CD8-positive, alpha-beta memory T cell (primary cell): ENCODE measurements at regions of chr16 and their contacts with region 1.

Region 1: DNA sequence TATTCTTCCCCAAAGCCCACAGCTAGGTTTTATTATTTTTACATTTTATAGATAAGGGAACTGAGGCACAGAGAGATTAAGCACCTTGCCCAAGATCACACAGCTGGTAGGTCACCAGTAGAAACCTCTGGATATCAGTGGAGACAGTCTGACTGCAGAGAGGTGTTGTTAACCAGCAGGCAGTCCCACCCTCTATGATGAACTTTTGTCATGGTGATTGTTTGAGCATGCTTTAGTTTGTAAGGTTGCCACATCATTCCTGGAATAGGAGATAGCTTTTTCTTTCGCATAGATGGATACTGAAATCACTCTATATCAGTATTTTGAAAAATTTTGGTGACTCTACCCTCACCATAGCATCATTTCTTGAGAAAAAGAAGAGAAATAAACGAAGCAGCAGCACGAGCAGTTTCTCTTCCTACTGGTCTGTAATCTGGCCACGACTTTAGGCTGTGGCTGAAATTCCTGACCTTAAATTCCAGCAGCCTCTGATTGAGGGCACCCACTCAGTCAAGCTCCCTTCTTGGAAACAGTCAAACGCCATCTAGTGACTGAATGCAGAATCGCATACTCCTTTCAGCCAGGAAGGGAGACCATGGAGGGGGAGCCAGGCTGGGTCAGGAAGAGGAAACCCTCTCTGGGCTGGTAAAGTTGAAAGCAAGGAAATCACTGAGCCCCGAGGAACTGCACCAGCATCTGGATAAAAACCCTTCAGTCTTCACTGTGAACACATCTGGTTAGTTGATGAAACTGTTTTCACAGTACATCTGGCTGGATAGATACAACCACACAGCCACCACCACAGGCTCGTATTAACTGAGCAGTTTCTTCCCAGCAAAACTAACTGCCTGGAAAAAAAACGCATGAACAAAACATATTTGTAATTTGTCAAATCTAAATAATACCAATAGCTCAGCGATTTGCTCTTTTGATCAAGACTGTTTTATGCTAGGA is 108.4 kb upstream of the XYLT1 start:
- DNase-seq: peak; percentile 32 to 61 (median 47)
- H3K4me3 ChIP-seq: no peak overlapping the region
- H3K4me3 Mint-ChIP-seq: no peak overlapping the region
- H3K27ac ChIP-seq: no peak overlapping the region
- H3K27ac Mint-ChIP-seq: peak overlapping the region in 2 of 8 donors; percentile 22 to 59
- H3K4me1 ChIP-seq: no peaks in the 10 kb centered on the region
- H3K4me1 Mint-ChIP-seq: peaks cover 0 to 4% (median 4%) of the 10 kb centered on the region in 3 donors
- H3K27me3 ChIP-seq: no peaks in the 10 kb centered on the region
- H3K27me3 Mint-ChIP-seq: peaks cover 3 to 5% of the 10 kb centered on the region in 2 donors

Region 2: GRCh38 chr16:17602678-17603077 is 23.5 kb after region 1 on chr16:
- CTCF ChIA-PET with region 1: interaction called, 11 read pairs
- POLR2A ChIA-PET with region 1: no interaction called
- DNase-seq: no peak
- H3K4me3 ChIP-seq: no peak overlapping the region
- H3K4me3 Mint-ChIP-seq: no peak overlapping the region
- H3K27ac ChIP-seq: no peak overlapping the region
- H3K27ac Mint-ChIP-seq: peak overlapping the region in 1 of 8 donors; percentile 46
- H3K4me1 ChIP-seq: peaks cover 9% of the 10 kb centered on the region
- H3K4me1 Mint-ChIP-seq: peaks cover 12 to 17% (median 16%) of the 10 kb centered on the region in 3 donors
- H3K27me3 ChIP-seq: no peaks in the 10 kb centered on the region
- H3K27me3 Mint-ChIP-seq: peaks cover 13 to 24% of the 10 kb centered on the region in 2 donors